ENCODE measurements at regions of chr11 and their contacts with region 1.

Region 1: DNA sequence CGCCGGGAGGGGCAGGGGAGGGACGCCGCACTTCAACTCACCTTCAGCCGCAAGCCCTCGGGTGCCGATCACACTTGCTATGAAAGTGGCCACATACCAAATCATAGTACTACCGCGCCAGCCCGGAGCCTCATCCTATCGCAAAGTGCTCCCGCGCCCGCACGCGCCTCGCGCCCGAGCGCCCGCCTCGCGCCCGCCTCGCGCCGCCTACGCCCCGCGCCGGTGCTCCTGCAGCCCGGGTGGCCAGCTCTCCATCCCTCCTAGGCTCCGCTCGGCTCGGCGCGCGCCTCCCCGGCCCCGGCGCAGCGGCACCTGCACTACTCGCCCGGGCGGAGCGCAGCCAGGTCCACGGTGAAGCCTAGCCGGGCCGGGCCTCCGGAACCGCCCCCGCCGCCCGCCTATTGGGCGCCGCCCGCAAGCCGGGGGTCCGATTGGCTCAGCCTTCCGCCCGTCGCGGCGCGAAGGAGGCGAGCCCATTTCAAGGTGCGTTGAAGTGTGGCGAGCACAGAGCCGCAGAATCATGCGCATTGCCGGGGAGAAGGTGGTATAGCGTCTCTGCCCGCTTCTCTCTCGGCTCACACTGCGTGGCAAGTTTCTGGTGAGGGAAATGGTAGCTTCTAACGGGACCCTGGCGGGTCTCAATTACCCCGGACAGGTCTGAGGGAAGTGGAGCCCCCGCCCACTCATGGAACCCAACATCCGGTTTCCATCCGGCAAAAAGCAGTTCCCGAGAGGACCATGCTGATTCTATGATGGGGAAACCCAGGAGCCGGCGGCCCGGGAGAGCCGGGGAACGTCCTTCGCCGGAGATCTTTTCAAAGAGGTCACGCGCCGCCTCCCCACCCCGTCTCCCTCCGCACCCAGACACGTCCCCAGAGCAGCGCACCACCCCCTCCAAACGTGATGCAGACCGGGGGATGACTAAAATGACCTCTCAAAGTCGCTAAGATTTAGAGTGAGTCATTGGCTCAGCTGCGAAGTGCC is at the start of gene IGSF9B:
- DNase-seq: peak; percentile 90
- H3K4me3 ChIP-seq: peak within 1 kb of the TSS; percentile 48 to 50
- H3K27ac ChIP-seq: peak within 1 kb of the TSS; percentile 75 to 78
- H3K4me1 ChIP-seq: peaks cover 2% of the 10 kb centered on the region
- H3K27me3 ChIP-seq: no peaks in the 10 kb centered on the region
- CTCF ChIP-seq: peak in 2 of 4 experiments; percentile 25 to 38
- POLR2A ChIP-seq: peak; percentile 84
- total RNA-seq, gene IGSF9B: 10.2 to 35.3 TPM

Region 2: GRCh38 chr11:133809569-133810491 is 147.1 kb before region 1 on chr11:
- intact Hi-C with region 1: no loop called
- DNase-seq: no peak
- H3K4me3 ChIP-seq: no peak overlapping the region
- H3K27ac ChIP-seq: no peak overlapping the region
- H3K4me1 ChIP-seq: no peaks in the 10 kb centered on the region
- H3K27me3 ChIP-seq: peaks cover 4% of the 10 kb centered on the region
- CTCF ChIP-seq: no peak
- POLR2A ChIP-seq: no peak

Region 3: DNA sequence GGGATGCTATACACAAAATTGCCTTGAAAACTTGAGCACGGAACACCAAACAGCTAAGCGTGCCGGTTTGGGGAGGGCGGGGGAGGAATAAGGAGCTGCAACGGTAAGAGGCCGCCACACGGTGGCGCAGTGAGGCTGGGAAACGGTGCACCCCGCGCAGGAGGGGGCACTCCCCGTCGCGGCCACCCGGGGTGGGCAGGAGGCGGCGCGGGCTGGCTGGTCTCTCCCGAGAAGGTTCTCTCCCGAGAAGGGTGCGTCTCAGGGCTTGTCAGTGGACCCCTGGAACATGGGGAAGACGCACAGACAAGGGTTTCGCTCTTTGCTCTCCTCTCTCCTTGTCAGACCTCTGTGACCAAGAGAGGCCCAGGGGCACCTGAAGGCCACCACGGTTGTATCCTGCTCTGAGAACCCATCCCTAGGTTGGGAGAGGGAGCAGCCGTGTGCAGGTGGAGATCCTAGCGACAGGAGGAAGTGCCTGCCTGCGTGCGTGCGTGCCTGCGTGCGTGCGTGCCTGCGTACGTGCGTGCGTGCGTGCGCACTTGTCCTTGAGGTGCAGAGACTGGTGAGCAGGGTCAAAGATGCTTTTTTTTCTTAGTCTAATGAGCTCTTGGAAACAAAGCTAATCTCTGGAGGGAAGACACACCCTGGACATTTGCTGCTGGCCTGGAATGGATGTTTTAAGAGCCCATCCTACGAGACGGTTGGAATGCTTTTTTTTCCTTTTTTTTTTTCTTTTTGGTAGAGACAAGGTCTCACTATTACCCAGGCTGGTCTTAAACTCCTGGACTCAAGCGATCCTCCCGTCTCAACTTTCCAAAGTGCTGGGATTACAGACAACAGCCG is 93.8 kb after region 1 on chr11:
- intact Hi-C with region 1: loop called (anchors 5 kb)
- DNase-seq: peak; percentile 60
- H3K4me3 ChIP-seq: peak overlapping the region in 1 of 2 donors; percentile 10
- H3K27ac ChIP-seq: peak overlapping the region in 1 of 2 donors; percentile 62
- H3K4me1 ChIP-seq: no peaks in the 10 kb centered on the region
- H3K27me3 ChIP-seq: no peaks in the 10 kb centered on the region
- CTCF ChIP-seq: peak; percentile 87 to 93 (median 90)
- POLR2A ChIP-seq: no peak

Region 4: DNA sequence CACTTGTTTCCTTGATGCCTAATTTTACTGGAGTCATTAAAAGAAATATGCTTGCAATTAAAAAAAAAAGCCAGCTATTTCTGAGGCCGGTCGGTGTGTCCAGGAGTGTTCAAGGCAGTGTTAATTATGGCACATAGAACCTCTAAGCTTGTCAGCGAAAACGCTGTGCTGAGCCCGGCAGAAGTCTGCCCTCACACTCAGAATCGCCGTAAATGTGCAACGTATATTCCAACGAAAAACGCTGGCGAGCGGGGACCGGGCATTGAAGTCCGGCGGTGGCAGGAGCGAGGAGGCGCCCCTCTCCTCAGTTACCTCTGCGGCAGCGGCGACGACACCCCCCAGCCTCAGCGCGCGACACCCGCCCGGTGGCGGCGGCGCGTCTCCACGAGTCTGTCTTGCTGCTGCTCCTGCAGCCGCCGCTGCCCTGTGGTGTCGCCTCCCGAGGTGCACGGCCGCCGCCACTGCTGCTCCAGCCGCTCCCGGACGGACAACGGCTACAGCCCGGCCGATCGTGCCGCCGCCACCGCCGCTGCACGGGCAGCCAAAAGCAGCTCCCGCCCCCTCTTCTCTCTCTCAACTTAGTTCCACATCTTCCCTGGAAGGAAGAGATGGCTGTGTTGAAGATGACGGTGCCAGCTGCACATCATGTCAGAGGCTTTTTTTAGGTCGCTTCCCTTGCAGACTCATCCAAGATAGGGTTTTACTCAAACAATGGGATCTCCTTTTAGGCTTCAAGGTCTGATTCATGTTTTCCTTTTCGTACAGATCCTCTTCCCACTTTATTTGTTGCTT is 167.9 kb after region 1 on chr11:
- intact Hi-C with region 1: loop called (anchors 10 kb)
- DNase-seq: peak; percentile 57
- H3K4me3 ChIP-seq: peak overlapping the region; percentile 17 to 36
- H3K27ac ChIP-seq: peak overlapping the region in 1 of 2 donors; percentile 29
- H3K4me1 ChIP-seq: peaks cover 2% of the 10 kb centered on the region
- H3K27me3 ChIP-seq: no peaks in the 10 kb centered on the region
- CTCF ChIP-seq: peak in 1 of 4 experiments; percentile 36
- POLR2A ChIP-seq: no peak